ENCODE measurements at regions of chr10 and their contacts with region 1.

Region 1: DNA sequence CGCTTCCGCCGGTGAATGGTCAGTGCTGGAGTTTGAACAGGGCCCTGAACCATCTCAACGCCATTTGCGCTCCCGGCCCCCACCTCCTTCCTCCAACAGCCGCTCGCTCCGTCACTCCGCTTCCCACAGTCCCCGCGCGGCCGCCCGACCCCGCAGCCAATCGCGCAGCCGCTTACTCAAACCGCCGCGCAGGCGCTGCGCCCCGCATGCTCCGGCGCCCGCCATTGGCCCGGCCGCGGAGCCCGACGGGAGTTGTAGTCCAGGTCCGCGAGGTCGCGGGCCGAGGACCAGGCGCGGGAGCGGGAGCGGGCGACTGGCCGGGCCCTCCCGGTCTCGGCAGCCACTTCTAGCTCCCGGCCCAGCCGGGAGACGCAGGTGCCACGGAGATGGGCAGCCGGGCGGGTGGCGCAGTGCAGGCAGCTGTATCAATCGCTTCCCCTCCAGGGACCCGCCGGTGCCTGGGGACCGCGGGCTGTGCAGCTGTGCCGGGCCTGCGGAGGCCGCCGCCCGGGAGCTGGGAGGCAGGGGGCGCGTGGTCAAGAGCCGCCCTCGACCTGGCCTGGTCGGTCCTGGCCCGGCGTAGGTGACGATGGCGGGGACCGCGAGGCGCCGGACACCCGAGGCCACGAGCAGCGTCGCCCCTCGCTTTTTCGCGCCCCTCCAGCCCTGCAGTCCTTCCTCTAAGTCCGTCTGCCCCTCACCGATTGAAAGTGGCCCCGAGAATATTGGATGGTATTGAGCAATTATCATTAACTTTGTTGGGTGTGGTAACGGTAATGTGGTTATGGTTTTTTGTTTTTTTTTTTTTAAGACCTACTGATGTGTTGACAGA is at the start of gene WAPL:
- DNase-seq: peak; percentile 99
- H3K4me3 Mint-ChIP-seq: peak within 1 kb of the TSS; percentile 97
- H3K27ac Mint-ChIP-seq: peak within 1 kb of the TSS; percentile 93
- H3K4me1 Mint-ChIP-seq: peaks cover 41% of the 10 kb centered on the region
- H3K27me3 Mint-ChIP-seq: no peaks in the 10 kb centered on the region
- total RNA-seq, gene WAPL: 47.2 and 50.6 TPM in 2 replicates

Region 2: DNA sequence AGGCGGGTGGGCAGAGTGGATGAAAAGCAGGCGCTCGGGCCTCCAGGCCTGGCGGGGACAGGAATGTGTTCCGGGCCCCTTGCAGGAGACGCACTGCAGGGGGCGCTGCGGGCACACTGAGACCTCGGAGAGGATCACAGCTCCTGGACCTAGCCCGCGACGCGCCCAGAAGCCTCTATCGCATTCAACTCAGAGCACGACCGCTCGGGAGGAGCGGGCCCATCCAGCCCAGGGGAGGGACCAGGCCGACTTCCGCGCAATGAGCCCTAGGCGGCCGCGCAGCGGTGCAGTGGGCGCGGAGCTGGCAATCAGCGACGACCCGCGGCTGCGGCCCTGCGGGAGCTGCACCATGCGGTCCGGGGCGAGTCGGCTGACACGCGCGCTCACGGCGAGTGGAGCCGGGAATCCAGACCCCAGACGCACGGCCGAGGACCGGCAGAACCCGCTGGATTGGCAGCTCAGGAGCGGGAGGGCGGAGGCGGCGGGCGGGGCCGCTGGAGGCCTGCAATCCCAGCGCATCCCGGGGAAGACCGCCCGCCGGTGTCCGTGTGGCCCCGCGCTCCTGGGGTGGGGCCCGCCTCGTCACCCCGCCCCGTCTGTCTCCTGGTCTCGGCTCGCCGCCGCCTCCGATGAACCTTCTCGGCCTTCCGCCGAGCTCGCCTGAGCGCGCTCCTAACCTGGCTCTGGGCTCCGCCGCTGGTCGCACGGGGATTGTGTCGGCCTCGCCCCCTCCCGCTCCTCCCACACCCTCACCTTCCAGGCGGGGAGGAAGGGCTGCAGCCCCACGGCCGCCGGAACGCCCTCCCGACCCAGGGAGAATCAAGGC is 121.8 kb before region 1 on chr10:
- intact Hi-C with region 1: loop called (anchors 1 kb)
- DNase-seq: peak; percentile 98
- H3K4me3 Mint-ChIP-seq: peak overlapping the region; percentile 89
- H3K27ac Mint-ChIP-seq: peak overlapping the region; percentile 95
- H3K4me1 Mint-ChIP-seq: peaks cover 22% of the 10 kb centered on the region
- H3K27me3 Mint-ChIP-seq: peaks cover 6% of the 10 kb centered on the region

Region 3: DNA sequence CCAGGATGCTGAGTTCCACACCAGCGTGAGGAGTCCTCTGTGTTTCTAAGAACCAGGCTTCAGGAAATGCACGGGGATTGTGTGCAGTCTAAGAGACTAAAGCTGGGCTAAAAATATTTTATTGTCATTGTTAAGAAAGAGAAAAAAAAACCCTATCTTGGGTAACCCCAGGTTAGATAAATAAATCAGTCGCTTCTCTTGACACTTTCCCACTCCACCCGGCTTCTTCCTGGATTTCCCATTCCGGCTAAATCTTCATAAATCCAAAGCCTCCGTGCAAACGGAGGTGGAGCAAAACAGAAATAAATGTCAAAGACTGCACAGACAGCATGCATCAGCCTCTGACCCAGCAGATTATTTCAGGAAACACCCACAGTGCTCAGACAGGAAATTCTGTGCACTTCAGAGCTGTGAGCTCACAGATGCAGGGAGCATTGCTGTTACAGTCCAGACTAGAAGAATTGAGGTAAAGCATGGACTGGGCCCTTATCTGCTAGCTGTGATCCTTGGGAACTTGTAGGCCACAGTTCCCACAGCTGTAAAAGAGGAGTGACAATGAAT is 110.5 kb before region 1 on chr10:
- intact Hi-C with region 1: loop called (anchors 1 kb)
- DNase-seq: peak; percentile 83
- H3K4me3 Mint-ChIP-seq: peak overlapping the region; percentile 78
- H3K27ac Mint-ChIP-seq: peak overlapping the region; percentile 92
- H3K4me1 Mint-ChIP-seq: peaks cover 36% of the 10 kb centered on the region
- H3K27me3 Mint-ChIP-seq: no peaks in the 10 kb centered on the region

Region 4: DNA sequence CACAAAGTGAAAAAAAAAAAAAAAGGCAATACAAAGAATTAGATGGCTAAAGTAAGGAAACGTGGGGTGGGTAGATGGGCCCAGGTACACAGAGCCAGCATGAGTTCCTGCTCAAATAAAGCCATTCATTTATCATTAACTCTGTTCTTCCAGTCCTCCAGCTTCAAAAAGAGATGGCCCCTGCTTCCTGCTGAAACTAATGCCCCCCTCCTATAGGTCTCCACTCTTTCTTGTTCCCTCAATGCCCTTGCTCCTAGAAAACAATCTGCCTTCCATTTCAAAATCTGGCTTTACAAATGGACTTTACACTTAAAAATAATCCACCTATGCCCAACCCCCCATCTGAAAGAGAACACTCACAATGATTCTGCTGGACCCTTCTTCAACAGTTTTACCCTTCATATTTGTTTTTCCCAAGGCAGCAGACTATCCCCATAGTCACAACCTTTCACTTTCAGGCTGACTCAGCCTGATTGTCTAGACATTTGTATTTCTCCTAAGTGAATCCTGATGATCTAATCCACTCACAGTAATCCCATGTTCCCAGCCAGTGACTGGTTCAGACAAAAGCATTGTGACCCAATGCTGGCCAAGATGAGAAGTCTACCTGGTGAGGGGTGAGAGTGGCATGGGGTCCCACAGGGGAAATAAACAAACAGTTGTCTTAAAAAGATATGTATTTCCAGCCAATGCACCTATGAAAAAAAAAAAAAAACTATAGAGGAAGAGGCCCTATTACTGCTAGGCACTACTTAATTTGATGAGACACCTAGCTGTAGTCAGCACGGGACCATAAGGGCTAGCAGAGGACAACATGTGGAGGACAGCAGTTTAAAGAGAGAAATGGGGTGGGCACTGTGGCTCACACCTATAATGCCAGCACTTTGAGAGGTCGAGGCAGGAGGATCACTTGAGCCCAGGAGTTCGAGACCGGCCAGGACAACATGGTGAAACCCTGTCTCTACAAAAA is 80.7 kb before region 1 on chr10:
- intact Hi-C with region 1: loop called (anchors 5 kb)
- DNase-seq: peak; percentile 63
- H3K4me3 Mint-ChIP-seq: no peak overlapping the region
- H3K27ac Mint-ChIP-seq: peak overlapping the region; percentile 31
- H3K4me1 Mint-ChIP-seq: peaks cover 28% of the 10 kb centered on the region
- H3K27me3 Mint-ChIP-seq: no peaks in the 10 kb centered on the region

Region 5: DNA sequence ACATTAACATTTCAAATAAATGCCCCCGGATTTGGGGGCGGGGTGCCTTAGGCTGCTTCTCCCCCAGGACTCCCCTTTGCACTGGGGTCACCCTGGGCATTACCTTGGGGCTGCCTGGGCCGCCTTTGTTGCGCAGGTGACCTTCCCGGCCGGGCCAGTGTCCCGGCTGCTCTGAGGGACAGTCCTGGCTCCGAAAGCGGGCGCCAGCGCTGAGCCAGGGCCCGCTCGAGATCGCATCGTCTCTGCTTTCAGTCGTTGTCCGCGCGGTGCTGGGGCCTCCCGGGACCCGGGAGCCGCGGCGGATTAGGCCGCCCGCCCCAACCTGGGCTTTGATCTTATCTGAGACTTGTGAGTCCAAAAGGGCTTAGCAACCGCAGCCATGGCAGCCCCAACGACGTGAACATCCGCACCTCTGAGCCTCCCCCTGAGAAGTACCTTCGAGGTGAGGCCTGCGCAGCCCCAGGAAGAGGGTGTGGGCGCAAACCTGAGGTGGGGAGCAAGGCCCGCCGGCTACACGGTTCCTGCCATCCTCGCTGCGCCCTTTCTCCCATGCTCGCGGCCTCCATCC is 14.5 kb after region 1 on chr10:
- intact Hi-C with region 1: loop called (anchors 2 kb)
- DNase-seq: peak; percentile 75
- H3K4me3 Mint-ChIP-seq: peak overlapping the region; percentile 73
- H3K27ac Mint-ChIP-seq: peak overlapping the region; percentile 41
- H3K4me1 Mint-ChIP-seq: peaks cover 17% of the 10 kb centered on the region
- H3K27me3 Mint-ChIP-seq: no peaks in the 10 kb centered on the region

Region 6: GRCh38 chr10:86585037-86585725 is 63.3 kb after region 1 on chr10:
- intact Hi-C with region 1: loop called (anchors 10 kb)
- DNase-seq: peak; percentile 93
- H3K4me3 Mint-ChIP-seq: no peak overlapping the region
- H3K27ac Mint-ChIP-seq: no peak overlapping the region
- H3K4me1 Mint-ChIP-seq: peaks cover 2% of the 10 kb centered on the region
- H3K27me3 Mint-ChIP-seq: no peaks in the 10 kb centered on the region

Region 7: GRCh38 chr10:86730227-86730626 is 208.3 kb after region 1 on chr10:
- intact Hi-C with region 1: no loop called
- DNase-seq: no peak
- H3K4me3 Mint-ChIP-seq: no peak overlapping the region
- H3K27ac Mint-ChIP-seq: no peak overlapping the region
- H3K4me1 Mint-ChIP-seq: no peaks in the 10 kb centered on the region
- H3K27me3 Mint-ChIP-seq: peaks cover 19% of the 10 kb centered on the region

Region 8: DNA sequence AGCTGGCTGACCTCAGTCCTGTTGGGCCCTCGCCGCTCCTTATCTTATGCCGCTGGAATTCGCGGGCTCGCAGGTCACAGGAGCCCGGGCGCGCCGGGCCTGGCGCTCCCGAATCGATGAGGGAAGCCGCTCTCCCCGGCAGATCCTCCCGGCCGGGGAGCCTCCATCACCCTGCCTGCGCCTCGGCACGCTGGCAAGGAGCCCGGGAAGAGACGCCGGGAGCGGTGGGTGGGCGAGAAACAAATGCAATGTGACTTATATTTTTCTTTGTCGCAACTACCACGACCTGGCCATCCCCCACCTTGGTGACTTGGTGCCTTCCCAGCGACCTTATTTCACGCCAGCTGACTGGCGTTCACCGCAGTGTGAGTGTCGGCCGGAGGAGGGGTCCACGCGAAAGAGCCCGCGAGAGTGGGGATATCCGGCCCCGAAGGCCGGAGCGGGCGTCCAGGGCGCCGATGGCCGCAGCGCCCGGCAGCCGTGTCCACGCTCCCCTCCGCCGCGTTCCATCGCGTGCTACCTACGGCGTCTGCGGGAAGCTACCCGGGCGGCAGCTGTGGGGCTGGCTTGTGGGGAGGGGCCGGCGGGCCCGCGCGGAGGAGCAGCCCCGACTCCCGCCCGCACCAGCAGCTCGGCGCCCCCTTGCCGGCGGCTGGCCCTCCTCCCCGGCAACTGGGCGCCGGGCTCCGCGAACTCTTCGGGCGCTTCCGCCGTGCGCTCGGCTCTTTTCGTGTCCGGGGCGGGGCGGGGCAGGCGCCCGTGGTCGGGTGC is 234.0 kb after region 1 on chr10:
- intact Hi-C with region 1: loop called (anchors 5 kb)
- DNase-seq: peak; percentile 97
- H3K4me3 Mint-ChIP-seq: peak overlapping the region; percentile 85
- H3K27ac Mint-ChIP-seq: peak overlapping the region; percentile 86
- H3K4me1 Mint-ChIP-seq: peaks cover 40% of the 10 kb centered on the region
- H3K27me3 Mint-ChIP-seq: peaks cover 36% of the 10 kb centered on the region